MCF 10A (cell line): ENCODE measurements at regions of chr9 and their contacts with region 1.

Region 1: GRCh38 chr9:137240861-137241489 is at the start of gene TUBB4B:
- DNase-seq: peak; percentile 100
- H3K4me3 Mint-ChIP-seq: peak within 1 kb of the TSS; percentile 80
- H3K27ac Mint-ChIP-seq: peak within 1 kb of the TSS; percentile 94
- H3K4me1 Mint-ChIP-seq: peaks cover 15% of the 10 kb centered on the region
- H3K27me3 Mint-ChIP-seq: no peaks in the 10 kb centered on the region
- CTCF ChIP-seq: no peak
- total RNA-seq, gene TUBB4B: 171 and 180 TPM in 2 replicates

Region 2: DNA sequence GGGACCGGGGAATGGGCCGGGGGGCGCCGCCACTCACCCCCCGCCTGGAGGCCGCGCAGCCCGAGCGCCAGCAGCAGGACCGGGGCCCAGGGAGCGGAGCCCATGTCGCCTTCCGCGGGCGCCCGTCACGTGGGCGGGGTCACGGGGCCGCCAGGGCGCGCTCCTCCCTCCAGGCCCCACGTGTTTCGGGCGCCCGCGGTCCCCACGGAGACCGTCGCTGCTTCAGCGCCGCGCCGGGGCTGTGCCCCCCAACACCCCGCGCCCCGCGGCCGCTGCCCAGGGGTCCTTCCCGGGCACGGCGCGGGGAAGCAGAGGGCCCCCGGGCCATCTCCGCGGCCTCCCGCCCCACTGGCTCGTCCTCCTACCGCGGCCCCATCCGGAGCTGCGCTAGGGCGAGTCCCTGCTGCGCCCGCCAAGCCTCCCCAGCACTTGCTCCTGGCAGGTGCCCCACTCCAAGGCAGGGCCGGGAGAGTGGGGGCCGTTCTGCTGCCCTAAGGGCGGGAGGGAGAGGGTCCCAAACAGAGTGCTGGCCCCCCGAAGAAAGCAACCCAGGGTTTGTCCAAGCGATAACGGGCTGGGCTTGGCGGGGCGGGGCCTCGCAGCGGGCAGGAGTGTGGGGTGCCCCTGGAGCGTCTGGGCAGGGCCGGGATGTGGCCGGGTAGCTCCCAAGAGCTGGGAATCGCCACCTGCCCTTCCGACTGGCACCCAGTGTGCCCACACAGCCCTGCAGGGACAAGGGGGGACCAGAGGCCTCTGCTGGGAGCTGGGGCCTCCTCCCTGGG is 126.2 kb before region 1 on chr9 and contains the start of gene DPP7:
- CTCF ChIA-PET with region 1: interaction called, 12 read pairs
- POLR2A ChIA-PET with region 1: interaction called, 5 read pairs
- intact Hi-C with region 1: no loop called
- DNase-seq: peak; percentile 53
- H3K4me3 Mint-ChIP-seq: peak within 1 kb of the TSS; percentile 62
- H3K27ac Mint-ChIP-seq: no peak within 1 kb of the TSS
- H3K4me1 Mint-ChIP-seq: no peaks in the 10 kb centered on the region
- H3K27me3 Mint-ChIP-seq: no peaks in the 10 kb centered on the region
- CTCF ChIP-seq: no peak
- total RNA-seq, gene DPP7: 139 and 157 TPM in 2 replicates

Region 3: GRCh38 chr9:137188490-137189296 is 52.3 kb before region 1 on chr9 and contains the starts of genes ANAPC2 and SSNA1:
- CTCF ChIA-PET with region 1: interaction called, 9 read pairs
- POLR2A ChIA-PET with region 1: interaction called, 29 read pairs
- intact Hi-C with region 1: loop called (anchors 2 kb)
- DNase-seq: peak; percentile 91
- H3K4me3 Mint-ChIP-seq: peak within 1 kb of the TSS; percentile 94
- H3K27ac Mint-ChIP-seq: peak within 1 kb of the TSS; percentile 95
- H3K4me1 Mint-ChIP-seq: peaks cover 10% of the 10 kb centered on the region
- H3K27me3 Mint-ChIP-seq: no peaks in the 10 kb centered on the region
- CTCF ChIP-seq: peak; percentile 25
- total RNA-seq, gene ANAPC2: 42.1 and 43.6 TPM in 2 replicates
- total RNA-seq, gene SSNA1: 81.4 and 82.6 TPM in 2 replicates

Region 4: DNA sequence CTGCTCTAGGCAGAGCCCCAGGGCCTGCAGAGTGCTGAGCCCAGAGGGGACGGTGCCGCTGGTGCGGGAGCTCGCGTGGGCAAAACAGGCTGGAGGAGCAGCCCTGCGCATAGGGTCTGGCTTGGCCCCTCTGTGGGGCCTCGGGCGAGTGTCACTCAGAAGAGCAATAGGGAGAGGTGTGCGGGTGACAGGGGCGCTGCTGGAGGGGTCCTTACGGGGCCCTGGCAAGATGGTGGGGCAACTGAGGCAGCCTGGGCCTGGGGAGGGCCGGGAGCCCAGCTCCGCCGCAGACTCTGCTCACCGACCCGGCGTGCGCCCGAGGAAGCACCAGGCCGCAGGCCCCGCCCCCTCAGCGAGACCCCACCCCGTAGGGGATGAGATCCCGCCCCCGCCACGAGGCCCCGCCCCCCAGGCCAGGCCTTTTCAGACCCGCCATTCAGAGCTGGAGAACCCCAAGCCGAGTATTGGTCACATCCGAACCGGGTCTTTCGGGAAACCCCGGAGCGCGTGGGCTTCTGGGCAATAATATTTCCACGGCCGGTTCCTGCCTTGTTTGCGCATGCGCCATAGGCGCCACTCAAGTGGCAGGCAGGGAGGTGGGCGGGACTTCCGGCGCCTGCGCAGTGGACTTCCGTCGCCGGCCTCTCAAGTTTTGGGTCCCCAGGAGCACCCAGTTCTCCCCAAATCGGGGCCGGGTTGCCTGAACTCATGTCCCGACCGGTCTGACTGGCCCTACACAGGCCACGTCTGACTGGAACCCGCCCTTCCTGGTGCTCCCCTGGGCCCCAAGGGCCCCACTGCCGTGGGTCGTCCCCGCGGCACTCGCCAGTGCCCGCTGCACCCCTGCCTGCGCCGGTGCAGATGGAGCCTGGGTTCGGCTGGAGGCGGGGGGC is 17.7 kb before region 1 on chr9:
- CTCF ChIA-PET with region 1: interaction called, 36 read pairs
- POLR2A ChIA-PET with region 1: interaction called, 32 read pairs
- intact Hi-C with region 1: no loop called
- DNase-seq: peak; percentile 98
- H3K4me3 Mint-ChIP-seq: peak overlapping the region; percentile 83
- H3K27ac Mint-ChIP-seq: peak overlapping the region; percentile 61
- H3K4me1 Mint-ChIP-seq: peaks cover 15% of the 10 kb centered on the region
- H3K27me3 Mint-ChIP-seq: no peaks in the 10 kb centered on the region
- CTCF ChIP-seq: no peak

Region 5: GRCh38 chr9:137551651-137552384 is 310.8 kb after region 1 on chr9 and contains the start of gene MRPL41:
- CTCF ChIA-PET with region 1: no interaction called
- POLR2A ChIA-PET with region 1: interaction called, 11 read pairs
- intact Hi-C with region 1: no loop called
- DNase-seq: peak; percentile 88
- H3K4me3 Mint-ChIP-seq: peak within 1 kb of the TSS; percentile 78
- H3K27ac Mint-ChIP-seq: peak within 1 kb of the TSS; percentile 49
- H3K4me1 Mint-ChIP-seq: peaks cover 5% of the 10 kb centered on the region
- H3K27me3 Mint-ChIP-seq: no peaks in the 10 kb centered on the region
- CTCF ChIP-seq: no peak
- total RNA-seq, gene MRPL41: 37.6 and 43.0 TPM in 2 replicates